ENCODE measurements at regions of chr10 and their contacts with region 1.

Region 1: GRCh38 chr10:30783939-30784500 is 154.5 kb upstream of the LYZL2 start:
- DNase-seq: no peak
- H3K4me3 ChIP-seq: peak overlapping the region; percentile 52 to 67
- H3K27ac ChIP-seq: peak overlapping the region; percentile 90
- H3K4me1 ChIP-seq: peaks cover 34% of the 10 kb centered on the region
- H3K27me3 ChIP-seq: no peaks in the 10 kb centered on the region
- CTCF ChIP-seq: peak; percentile 50 to 90 (median 87)
- POLR2A ChIP-seq: no peak

Region 2: DNA sequence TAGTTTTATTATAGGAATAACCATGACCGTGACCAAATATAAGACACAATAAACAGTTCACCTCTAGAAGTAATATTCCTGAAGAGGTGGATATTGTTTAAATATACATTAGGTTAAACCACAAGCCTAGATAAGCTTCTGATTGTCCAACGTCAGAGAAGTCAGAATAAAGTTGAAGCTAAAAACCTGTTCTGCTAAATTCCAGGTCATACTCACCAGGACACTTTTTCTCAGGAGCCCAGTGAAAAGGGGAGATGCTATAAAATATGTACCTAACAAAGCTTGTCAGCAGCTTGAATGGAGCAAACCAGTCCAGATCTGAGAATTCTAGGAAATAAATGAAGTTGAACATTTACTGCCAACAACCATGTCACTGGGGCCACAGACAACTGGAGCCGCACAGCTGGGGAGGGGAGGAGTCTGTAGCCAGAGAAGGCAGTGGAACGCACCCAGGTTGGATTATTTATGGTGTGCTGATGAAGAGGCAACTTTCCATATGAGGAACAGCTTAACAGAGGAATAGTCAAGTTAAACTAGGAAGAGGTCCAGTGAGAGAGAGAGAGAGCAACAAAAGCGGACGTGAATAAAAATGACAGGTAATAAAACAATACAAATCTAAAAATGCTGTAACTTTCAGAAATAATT is 56.5 kb after region 1 on chr10:
- intact Hi-C with region 1: no loop called
- DNase-seq: peak in 1 of 2 donors; percentile 79
- H3K4me3 ChIP-seq: no peak overlapping the region
- H3K27ac ChIP-seq: no peak overlapping the region
- H3K4me1 ChIP-seq: peaks cover 7% of the 10 kb centered on the region
- H3K27me3 ChIP-seq: no peaks in the 10 kb centered on the region
- CTCF ChIP-seq: no peak
- POLR2A ChIP-seq: no peak

Region 3: DNA sequence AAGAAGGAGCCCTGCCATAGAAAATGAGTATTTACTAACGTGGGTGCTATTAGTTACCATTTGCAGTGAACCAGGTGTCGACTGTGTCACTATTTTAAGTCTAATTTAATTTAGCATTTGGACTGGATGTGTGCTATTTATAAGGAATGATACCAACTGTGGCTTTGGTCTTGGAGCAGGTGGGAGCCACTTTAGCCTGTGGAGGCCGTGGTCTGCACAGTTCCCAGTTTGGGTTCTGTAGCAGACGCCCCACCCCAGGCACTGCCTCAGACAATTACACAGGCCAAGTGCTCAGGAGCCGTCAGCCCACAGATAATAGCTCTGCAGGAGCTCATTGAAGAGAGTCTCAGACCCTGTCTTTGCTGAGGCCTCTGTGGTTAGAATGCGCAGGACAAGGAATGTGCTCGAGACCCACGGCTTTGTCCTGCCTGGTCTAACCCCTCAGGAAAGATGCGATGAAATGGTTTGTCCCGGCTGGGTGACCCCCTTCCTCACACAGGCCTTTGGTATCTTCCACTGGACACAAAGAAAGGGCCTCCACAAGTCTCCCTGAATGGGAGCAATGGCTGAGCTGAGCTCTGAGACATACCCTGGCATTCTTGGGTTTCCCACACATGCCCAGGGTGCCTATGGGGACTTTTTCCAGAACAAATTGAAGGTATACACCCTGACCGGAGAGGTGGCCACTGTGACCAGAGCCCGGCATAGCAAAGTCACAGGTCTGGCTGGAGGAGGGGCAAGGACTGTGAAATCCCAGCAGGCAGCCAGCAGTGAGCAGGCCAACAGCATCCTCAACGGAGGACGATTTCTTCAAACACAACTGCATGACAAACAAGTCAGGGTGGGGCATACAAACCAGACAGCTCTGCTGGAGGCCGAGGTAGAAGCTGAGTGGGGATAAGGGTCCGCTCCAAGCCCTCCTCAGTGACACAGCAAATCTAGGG is 893.4 kb after region 1 on chr10:
- intact Hi-C with region 1: loop called (anchors 10 kb)
- DNase-seq: no peak
- H3K4me3 ChIP-seq: no peak overlapping the region
- H3K27ac ChIP-seq: peak overlapping the region; percentile 18
- H3K4me1 ChIP-seq: peaks cover 18% of the 10 kb centered on the region
- H3K27me3 ChIP-seq: no peaks in the 10 kb centered on the region
- CTCF ChIP-seq: no peak
- POLR2A ChIP-seq: no peak